Posterior vena cava (tissue), 2 donors: ENCODE measurements at regions of chr3 and their contacts with region 1.

Region 1: DNA sequence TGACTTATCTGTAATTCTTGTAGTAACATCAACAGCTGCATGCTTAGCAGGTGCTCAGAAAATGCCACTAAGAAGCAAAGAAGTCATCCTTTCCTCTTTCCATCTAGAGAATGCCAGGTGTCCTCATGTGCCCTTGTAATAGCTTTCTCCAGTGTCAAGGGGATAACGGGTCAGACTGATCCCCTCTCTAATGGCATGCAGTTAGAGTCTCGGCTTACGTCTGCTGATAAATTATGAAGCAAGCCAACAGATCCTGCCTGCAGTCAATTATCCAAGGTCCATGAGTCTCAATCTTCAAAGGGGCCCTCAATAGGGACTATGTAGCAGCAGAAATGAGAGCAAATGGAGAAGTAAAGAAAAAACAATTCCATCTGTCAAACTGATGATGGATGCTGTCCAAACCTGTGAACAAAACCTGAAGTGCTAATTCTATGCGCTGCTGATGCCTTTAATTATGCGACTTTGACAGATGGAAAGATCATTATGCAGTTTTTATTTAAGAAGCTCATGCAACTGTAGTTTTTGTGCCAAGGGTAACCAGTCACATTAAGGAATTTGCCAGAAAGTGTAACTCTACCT is 162.8 kb upstream of the PEX5L start:
- DNase-seq: no peak

Region 2: DNA sequence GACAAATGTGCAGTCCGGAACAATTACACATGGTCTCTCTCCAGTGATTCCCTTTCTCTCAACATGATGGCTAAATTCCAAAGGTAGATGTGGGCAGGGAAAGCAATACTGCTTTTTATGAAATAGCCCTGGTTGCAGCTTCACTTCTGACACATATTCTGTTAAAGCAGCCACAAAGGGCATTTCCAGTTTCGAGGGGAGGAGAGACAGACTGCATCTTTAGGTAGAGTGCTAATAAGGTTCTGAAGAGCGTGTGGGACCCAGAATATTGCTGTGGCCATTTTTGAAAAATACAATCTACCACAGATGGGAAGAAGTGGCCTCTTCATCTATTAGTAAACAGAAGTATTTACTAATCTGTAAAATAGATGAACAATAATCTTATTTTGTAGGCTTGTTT is 23.4 kb before region 1 on chr3:
- intact Hi-C with region 1: loop called in 1 of 2 experiments (anchors 1 kb)
- DNase-seq: no peak

Region 3: GRCh38 chr3:180466401-180467011 is 267.0 kb after region 1 on chr3:
- intact Hi-C with region 1: no loop called
- DNase-seq: no peak